Mammary epithelial cell (primary cell): ENCODE measurements at regions of chr18 and their contacts with region 1.

Region 1: DNA sequence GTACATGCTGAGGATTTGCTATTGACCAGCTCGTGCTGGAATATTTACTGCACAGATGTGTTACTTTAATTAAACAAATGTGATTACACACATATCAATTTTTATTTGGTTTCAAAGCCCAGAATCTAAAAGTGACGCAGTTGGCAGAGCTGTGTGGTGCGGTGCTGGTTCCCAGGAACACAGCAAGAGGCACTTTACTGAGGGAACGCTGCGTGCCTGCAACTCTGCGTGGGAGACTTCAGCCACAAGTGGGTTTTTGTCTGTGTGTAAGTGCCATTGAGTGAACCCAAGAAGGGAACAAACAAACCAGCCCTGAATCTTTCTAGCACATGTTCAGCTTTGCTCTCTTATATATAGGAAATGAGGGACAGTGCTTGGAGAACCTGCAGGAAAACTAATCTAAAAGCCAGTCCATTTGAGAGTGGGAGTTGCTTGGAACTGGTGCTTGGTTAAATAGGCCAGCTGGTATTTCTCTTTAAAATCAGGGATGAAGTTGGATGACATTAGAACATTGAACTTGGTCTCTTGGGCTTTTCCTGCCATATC is 196.6 kb upstream of the CELF4 start:
- DNase-seq: no peak
- H3K4me3 ChIP-seq: no peak overlapping the region
- H3K27ac ChIP-seq: no peak overlapping the region
- H3K4me1 ChIP-seq: no peaks in the 10 kb centered on the region
- H3K27me3 ChIP-seq: no peaks in the 10 kb centered on the region
- CTCF ChIP-seq: no peak

Region 2: GRCh38 chr18:37516361-37516853 is 245.7 kb before region 1 on chr18:
- CTCF ChIA-PET with region 1: no interaction called
- dilution Hi-C with region 1: no loop called
- in situ Hi-C with region 1: no loop called
- intact Hi-C with region 1: no loop called
- DNase-seq: no peak
- H3K4me3 ChIP-seq: no peak overlapping the region
- H3K27ac ChIP-seq: no peak overlapping the region
- H3K4me1 ChIP-seq: no peaks in the 10 kb centered on the region
- H3K27me3 ChIP-seq: no peaks in the 10 kb centered on the region
- CTCF ChIP-seq: no peak

Region 3: DNA sequence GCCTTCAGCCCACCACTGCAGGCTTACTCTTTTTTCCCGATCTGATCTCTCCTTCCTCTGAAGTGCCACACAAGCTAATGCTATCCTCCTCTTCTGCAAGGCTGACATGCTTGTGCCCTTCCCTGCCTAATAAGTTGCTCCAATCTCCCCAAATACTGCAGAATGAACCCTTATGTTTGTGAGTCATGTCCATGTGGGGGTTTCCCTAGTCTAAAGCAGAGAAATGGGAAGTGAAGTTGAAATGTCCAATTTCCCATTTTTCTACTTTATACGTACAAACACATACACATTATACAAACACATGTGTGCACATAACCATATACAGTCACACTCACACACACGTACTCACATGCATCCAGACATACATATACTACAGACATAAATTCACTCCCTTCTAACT is 91.6 kb after region 1 on chr18:
- CTCF ChIA-PET with region 1: no interaction called
- dilution Hi-C with region 1: no loop called
- in situ Hi-C with region 1: no loop called
- intact Hi-C with region 1: no loop called
- DNase-seq: no peak
- H3K4me3 ChIP-seq: no peak overlapping the region
- H3K27ac ChIP-seq: no peak overlapping the region
- H3K4me1 ChIP-seq: no peaks in the 10 kb centered on the region
- H3K27me3 ChIP-seq: peaks cover 1% of the 10 kb centered on the region
- CTCF ChIP-seq: no peak

Region 4: DNA sequence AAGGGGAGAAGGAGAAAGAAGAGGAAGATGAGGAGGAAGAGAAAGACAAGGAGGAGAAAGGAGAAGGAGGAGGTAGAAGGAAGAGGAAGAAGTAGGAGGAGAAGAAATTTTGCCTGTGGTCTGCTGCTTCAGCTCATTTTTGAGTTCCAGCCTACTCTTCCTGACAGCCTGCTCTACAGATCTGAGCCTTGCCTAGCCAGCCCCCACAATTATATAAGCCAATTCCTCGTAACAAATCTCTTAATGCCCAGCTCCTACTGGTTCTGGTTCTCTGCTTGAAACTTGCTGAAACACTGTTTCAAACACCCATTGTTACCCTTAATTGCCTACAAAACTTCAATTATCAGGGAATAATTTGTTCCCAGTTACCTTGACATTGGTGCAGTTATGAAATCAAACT is 817.6 kb after region 1 on chr18:
- CTCF ChIA-PET with region 1: interaction called, 24 read pairs
- dilution Hi-C with region 1: no loop called
- in situ Hi-C with region 1: no loop called
- intact Hi-C with region 1: no loop called
- DNase-seq: no peak
- H3K4me3 ChIP-seq: no peak overlapping the region
- H3K27ac ChIP-seq: no peak overlapping the region
- H3K4me1 ChIP-seq: no peaks in the 10 kb centered on the region
- H3K27me3 ChIP-seq: peaks cover 3% of the 10 kb centered on the region
- CTCF ChIP-seq: no peak